GM10248 (cell line): ENCODE measurements at regions of chr9 and their contacts with region 1.

Region 1: GRCh38 chr9:99859243-99859980 is 37.7 kb downstream of the NR4A3 start:
- DNase-seq: no peak
- CTCF ChIP-seq: no peak

Region 2: GRCh38 chr9:99842797-99843196 is 16.6 kb before region 1 on chr9:
- CTCF ChIA-PET with region 1: interaction called, 28 read pairs
- POLR2A ChIA-PET with region 1: no interaction called
- DNase-seq: no peak
- CTCF ChIP-seq: no peak

Region 3: GRCh38 chr9:99873531-99873930 is 14.1 kb after region 1 on chr9:
- CTCF ChIA-PET with region 1: interaction called, 11 read pairs
- POLR2A ChIA-PET with region 1: no interaction called
- DNase-seq: no peak
- CTCF ChIP-seq: no peak

Region 4: DNA sequence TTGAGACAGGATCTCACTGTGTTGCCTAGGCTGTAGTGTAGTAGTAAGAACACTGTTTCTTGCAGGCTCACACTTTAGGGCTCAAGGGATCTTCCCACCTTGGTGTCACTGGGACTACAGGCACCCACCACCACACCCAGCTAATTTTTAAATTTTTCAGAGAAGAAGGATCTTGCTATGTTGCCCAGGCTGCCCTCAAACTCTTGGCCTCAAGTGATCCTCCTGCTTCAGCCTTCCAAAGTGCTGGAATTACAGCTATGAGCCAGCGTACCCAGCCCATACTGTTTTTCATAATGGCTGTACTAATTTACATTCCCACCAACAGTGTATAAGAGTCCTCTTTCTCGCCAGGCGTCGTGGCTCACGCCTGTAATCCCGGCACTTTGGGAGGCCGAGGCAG is 52.2 kb after region 1 on chr9:
- CTCF ChIA-PET with region 1: no interaction called
- POLR2A ChIA-PET with region 1: no interaction called
- DNase-seq: no peak
- CTCF ChIP-seq: no peak